Activated CD4-positive, alpha-beta memory T cell treated with anti-CD3 and anti-CD28 coated beads, Interleukin-2, amount 10 ng/mL, durations not matched to agents 7 days and 5 days (primary cell): ENCODE measurements at regions of chr15 and their contacts with region 1.

Region 1: DNA sequence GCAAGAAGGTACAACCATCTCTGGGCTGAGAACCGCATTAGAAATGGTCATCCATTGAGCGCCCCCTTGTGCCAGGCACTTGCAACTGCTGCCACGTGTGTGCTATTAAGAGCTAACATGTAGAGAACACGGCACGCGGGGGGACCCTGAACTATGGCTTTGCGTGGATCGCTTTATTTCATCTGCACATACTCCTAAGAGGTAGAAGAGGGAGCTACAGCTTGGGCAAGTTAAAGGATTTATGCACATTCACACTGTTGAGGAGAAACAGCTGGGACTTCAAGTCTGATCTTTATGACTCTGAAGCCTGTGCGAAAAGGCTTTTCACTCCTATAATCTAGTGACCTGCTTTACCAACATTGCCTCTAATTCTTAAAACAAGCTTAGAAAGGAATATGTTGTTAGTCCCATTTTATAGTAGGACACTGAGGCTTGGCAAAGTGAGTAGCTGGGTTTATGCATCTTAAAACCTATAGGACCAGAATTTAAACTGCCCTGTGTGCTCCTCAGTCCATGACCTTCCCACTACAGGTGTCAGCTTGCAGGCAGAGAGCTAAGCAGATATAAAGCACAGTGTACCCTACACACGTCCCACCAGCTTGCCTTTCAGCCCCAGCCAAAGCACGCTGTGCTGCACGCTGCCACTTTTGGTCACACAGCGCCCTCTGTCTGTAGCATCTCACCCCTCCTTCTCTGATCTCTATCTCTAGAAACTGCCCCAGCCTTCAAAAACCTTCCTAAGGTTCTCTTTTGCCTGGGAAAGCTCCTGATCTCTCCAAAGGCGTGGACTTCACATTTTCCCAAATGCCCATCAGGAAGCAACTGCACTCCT is 57.8 kb downstream of the STARD5 start:
- DNase-seq: peak; percentile 87
- H3K4me3 Mint-ChIP-seq: peak overlapping the region; percentile 47
- H3K27ac Mint-ChIP-seq: peak overlapping the region; percentile 45
- H3K4me1 Mint-ChIP-seq: peaks cover 25% of the 10 kb centered on the region
- H3K27me3 Mint-ChIP-seq: peaks cover 12% of the 10 kb centered on the region

Region 2: GRCh38 chr15:80989518-80990478 is 276.4 kb before region 1 on chr15 and contains the start of gene MESD:
- CTCF ChIA-PET with region 1: interaction called, 31 read pairs
- POLR2A ChIA-PET with region 1: interaction called, 7 read pairs
- DNase-seq: peak; percentile 98
- H3K4me3 Mint-ChIP-seq: peak within 1 kb of the TSS; percentile 98
- H3K27ac Mint-ChIP-seq: peak within 1 kb of the TSS; percentile 91
- H3K4me1 Mint-ChIP-seq: peaks cover 62% of the 10 kb centered on the region
- H3K27me3 Mint-ChIP-seq: no peaks in the 10 kb centered on the region
- total RNA-seq, gene MESD: 34.5 to 36.1 TPM

Region 3: GRCh38 chr15:81126892-81127291 is 139.3 kb before region 1 on chr15:
- CTCF ChIA-PET with region 1: interaction called, 11 read pairs
- POLR2A ChIA-PET with region 1: no interaction called
- DNase-seq: no peak
- H3K4me3 Mint-ChIP-seq: no peak overlapping the region
- H3K27ac Mint-ChIP-seq: no peak overlapping the region
- H3K4me1 Mint-ChIP-seq: no peaks in the 10 kb centered on the region
- H3K27me3 Mint-ChIP-seq: peaks cover 71% of the 10 kb centered on the region

Region 4: DNA sequence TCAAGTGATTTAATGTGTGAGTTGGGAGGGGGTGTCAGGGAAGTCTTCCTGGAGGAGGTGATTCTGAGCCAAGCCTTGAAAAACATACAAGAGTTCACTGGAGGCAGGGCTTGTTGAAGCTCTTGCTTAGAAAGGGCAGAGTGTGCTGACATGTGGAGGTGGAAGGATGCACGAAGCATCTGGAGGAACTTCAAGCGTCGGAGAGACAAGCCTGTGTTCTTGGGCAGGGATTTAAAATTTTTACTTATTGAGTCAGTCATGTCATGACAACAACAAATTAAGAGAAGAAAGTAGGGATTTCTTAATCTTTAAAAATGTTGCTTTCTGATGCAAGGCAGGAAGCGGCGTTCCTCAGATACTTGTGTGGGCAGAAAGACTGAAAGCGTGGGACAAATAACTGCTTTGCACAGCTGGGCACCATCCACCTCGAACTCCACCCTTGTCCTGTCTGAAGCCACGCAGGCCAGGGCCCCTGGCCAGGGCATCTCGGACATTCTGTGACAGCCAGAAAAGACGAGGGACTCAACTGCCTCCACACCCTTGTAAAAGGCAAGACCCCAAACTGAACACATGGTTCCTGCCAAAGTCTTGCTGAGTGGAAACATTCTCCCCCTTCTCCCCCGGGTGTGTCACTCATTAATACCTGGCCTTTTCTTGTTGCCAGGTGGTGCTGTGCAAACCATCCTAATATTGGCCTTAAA is 76.4 kb before region 1 on chr15:
- CTCF ChIA-PET with region 1: interaction called, 10 read pairs
- POLR2A ChIA-PET with region 1: no interaction called
- DNase-seq: no peak
- H3K4me3 Mint-ChIP-seq: no peak overlapping the region
- H3K27ac Mint-ChIP-seq: no peak overlapping the region
- H3K4me1 Mint-ChIP-seq: peaks cover 2% of the 10 kb centered on the region
- H3K27me3 Mint-ChIP-seq: peaks cover 47% of the 10 kb centered on the region

Region 5: DNA sequence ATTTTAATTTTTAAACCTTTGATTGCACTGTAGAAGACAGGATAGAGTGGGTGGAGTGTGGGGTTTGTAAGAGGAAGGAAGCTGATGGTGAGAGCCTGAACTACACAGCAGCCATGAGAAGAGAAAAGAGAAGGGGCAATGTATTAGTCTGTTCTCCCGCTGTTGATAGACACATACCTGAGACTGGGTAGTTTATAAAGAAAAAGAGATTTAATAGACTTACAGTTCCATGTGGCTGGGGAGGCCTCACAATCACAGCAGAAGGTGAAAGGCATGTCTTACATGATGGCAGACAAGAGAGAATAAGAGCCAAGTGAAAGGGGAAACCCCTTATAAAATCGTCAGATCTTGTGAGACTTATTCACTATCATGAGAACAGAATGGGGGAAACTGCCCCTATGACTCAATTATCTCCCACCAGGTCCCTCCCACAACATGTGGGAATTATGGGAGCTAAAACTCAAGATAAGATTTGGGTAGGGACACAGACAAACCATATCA is 20.5 kb after region 1 on chr15:
- CTCF ChIA-PET with region 1: interaction called, 25 read pairs
- POLR2A ChIA-PET with region 1: interaction called, 3 read pairs
- DNase-seq: no peak
- H3K4me3 Mint-ChIP-seq: no peak overlapping the region
- H3K27ac Mint-ChIP-seq: peak overlapping the region; percentile 69
- H3K4me1 Mint-ChIP-seq: peaks cover 49% of the 10 kb centered on the region
- H3K27me3 Mint-ChIP-seq: no peaks in the 10 kb centered on the region

Region 6: DNA sequence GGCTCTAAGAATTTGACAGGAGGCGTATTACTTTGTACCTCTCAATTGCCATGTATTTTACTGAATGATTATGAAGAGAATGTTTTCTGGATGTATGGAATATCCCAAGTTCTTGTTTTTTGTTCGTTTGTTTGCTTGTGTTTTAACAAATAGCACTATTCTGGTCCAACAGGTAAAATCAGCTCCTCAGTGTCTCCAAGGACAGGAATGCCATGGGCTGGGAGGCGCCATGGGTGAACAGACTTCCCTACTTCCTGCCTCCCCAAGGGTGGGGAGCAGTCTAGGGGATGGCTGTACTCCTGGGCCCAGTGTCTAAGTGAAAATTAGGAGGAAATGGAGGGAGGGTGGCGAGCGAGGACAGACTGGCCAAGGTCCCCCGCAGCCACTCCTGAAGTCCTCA is 76.4 kb after region 1 on chr15:
- CTCF ChIA-PET with region 1: interaction called, 26 read pairs
- POLR2A ChIA-PET with region 1: no interaction called
- DNase-seq: no peak
- H3K4me3 Mint-ChIP-seq: no peak overlapping the region
- H3K27ac Mint-ChIP-seq: no peak overlapping the region
- H3K4me1 Mint-ChIP-seq: no peaks in the 10 kb centered on the region
- H3K27me3 Mint-ChIP-seq: peaks cover 11% of the 10 kb centered on the region

Region 7: DNA sequence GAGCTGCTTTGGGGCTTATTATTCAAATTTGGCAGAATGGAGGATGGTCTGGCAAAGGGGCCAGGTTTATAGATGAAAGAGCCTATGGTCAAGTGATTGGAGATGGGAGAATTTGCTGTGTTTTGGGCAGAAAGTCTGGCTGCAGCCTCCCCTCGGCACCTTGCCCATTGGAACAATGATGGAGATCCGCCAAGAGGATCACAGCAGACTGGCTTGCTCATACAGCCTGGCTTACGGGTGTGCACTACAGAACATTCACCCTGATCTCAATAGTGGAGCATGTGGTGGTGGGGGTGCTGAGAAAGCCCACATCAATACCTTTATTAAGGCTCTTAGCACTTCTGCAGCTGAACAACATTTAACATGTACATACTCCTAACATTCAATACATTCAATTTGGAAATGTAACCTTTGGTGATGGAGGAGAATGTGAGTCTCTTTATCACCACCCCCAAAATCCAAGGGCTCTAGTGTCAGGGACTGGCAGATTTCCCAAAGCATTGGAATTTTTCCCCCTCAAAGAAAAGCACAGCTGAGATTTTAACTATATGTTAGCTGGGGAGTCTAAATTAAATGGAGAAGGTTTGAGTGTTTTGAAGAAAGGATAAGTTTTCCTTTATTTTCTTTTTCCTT is 226.3 kb after region 1 on chr15:
- CTCF ChIA-PET with region 1: no interaction called
- POLR2A ChIA-PET with region 1: no interaction called
- DNase-seq: no peak
- H3K4me3 Mint-ChIP-seq: no peak overlapping the region
- H3K27ac Mint-ChIP-seq: no peak overlapping the region
- H3K4me1 Mint-ChIP-seq: no peaks in the 10 kb centered on the region
- H3K27me3 Mint-ChIP-seq: peaks cover 7% of the 10 kb centered on the region